ENCODE measurements at regions of chr3 and their contacts with region 1.

Region 1: DNA sequence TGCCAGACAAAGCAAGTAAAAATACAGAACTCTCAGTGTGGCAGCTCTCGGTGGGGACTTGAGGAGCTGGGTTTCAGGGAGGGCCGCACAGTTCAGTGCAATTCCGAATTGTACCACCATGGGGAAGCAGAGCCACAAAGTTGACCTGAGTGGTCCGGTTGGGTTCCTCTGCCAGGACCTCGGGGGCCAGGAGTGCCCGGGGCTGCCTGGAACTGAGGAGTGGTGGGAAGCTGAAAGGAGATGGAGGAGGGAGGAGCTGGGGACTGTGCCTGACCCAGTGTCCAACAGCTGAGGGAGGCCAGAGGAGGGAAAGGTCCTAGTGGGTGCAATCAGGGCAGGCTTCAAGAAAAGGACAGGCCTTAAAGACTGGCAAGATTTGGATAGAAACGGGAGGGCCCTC is 32.2 kb upstream of the TRH start:
- DNase-seq: peak; percentile 72 to 82 (median 73)
- H3K4me3 ChIP-seq: no peak overlapping the region
- H3K27ac ChIP-seq: no peak overlapping the region
- H3K4me1 ChIP-seq: peaks cover 1 to 15% (median 4%) of the 10 kb centered on the region in 4 experiments
- H3K27me3 ChIP-seq: no peaks in the 10 kb centered on the region

Region 2: DNA sequence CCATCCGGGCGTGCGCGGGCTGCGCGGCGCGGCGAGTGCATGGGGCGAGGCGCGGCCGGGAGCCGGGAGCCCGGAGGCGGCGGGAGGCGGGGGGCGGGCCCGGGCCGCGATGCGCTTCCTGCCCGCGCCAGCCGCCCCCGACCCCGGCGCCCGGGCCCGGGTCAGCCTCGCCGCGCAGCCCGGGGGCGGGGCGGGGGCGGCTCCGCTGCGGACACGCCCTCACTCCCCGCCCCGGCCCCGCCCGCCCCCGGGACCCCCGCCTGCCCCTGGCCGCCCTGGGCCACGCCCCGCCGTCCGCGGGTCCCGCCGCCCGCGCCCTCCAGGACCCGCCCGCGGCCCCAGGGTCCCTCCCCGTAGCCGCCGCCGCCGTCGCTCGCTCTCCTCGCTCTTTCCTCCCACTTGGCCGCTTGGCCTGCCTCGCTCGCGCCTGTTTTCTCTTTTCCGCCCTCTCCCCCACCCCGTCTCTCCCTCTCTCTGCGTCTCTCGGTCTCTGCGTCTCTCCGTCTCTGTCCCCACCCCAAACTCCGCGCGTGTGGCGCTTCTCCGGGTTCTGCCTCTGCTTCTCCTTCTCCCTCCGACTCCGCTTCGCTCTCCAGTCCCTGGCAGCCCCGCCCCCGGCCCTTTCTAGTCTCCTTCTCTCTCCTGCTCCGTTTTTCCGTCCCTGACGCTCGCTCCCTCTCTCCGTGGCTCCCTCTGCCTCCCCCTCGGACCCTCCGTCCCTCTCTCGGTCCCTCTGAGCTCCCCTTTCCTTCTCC is 335.5 kb before region 1 on chr3 and contains the start of gene PLXND1:
- CTCF ChIA-PET with region 1: no interaction called
- POLR2A ChIA-PET with region 1: no interaction called
- DNase-seq: peak in 2 of 3 donors; percentile 55 to 65
- H3K4me3 ChIP-seq: peak within 1 kb of the TSS; percentile 52 to 82 (median 73)
- H3K27ac ChIP-seq: peak within 1 kb of the TSS in 1 of 2 experiments; percentile 25
- H3K4me1 ChIP-seq: peaks cover 0 to 84% (median 70%) of the 10 kb centered on the region in 4 experiments
- H3K27me3 ChIP-seq: no peaks in the 10 kb centered on the region

Region 3: DNA sequence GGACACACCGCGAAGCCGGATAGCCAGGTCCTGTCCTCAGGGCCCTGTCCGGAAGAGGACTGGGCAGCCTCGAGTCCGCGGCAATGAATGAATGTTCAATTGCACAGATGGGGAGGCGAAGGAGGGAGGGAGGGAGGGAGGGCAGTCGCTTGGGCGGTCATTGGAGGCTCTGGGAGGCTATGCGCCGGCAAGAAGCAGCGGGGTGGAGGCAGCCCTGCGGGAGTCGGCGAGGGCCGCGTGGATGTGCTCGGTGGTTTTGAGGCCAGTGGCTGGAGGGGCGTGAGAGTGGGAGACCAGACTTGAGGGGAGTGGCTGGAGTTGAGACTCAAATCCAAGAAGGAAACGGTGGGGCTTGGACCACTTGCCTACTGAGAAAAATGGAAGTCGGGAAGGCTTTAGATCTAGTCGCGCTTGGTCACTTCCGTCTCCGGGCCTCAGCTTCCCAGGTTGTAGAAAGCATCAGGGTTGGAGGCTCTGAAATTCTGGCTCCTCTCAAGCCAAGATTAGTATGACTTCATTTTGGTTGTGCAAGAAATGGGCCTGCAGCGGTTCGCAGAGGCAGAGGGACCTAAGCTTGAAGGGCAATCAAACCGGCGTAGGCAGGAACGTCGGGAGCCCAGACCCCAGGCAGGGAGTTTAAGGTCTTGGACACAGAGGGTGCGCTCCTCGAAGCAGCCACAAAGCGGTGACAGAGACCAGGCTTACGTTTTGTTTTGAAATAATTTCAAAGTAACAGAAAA is 314.7 kb before region 1 on chr3:
- CTCF ChIA-PET with region 1: interaction called, 13 read pairs
- POLR2A ChIA-PET with region 1: interaction called, 3 read pairs
- DNase-seq: peak; percentile 83 to 91 (median 90)
- H3K4me3 ChIP-seq: peak overlapping the region; percentile 51 to 81 (median 71)
- H3K27ac ChIP-seq: no peak overlapping the region
- H3K4me1 ChIP-seq: peaks cover 0 to 44% (median 28%) of the 10 kb centered on the region in 4 experiments
- H3K27me3 ChIP-seq: no peaks in the 10 kb centered on the region

Region 4: DNA sequence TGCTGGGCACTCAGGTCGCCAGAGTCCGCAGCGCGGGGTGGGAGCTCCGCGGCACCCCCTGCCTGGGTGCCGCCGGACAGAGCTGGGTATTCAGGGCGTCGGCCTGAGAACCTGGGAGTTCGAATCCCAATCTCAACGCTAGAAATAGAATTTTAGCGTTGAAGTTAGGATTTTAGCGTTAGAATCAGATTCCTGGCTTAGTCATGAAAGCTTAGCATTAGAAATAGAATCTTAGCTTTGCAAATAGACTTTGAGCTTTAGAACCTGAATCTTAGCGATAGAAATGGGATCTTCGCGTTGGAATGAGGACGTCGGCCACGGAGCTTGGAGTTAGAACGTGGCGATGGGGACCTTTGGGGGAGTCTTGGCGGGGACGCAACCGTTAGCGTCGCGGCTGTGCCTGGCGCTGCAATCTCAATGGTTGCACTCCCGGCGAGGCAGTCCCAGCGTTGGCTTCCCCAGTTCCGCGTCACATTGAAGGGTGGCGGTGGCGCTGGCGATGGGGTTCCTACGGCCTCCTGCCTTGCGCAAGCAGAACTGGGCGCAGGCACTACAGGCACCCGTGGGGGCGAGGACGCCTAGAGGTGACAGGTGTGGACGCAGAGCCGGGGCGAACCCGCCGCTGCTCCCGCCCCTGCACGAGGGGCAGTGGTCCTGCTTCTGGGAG is 32.9 kb after region 1 on chr3:
- CTCF ChIA-PET with region 1: interaction called, 69 read pairs
- POLR2A ChIA-PET with region 1: interaction called, 4 read pairs
- DNase-seq: peak; percentile 31 to 75 (median 62)
- H3K4me3 ChIP-seq: peak overlapping the region; percentile 32 to 75 (median 66)
- H3K27ac ChIP-seq: no peak overlapping the region
- H3K4me1 ChIP-seq: peaks cover 0 to 20% (median 20%) of the 10 kb centered on the region in 4 experiments
- H3K27me3 ChIP-seq: peaks cover 0 to 36% (median 10%) of the 10 kb centered on the region in 5 experiments

Region 5: DNA sequence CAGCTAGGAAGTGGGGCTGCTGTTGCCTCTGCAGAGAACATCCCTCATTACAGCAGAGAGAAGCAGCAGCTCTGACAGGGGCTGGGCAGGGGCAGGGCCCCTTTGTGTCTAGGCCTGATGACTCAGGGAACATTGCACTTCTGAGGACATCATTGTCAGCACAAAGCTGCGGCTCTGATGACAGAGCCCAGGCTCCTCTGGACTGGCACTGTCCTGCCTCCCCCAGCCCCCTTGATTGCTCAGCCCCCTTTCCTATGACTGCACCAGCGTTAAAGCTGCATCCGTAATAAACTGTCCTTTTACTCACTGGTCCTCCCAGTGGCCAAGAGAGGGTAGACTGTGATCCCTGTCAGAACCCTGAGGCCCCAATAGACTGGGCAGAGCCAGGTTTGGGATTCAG is 50.5 kb after region 1 on chr3:
- CTCF ChIA-PET with region 1: interaction called, 72 read pairs
- POLR2A ChIA-PET with region 1: no interaction called
- DNase-seq: peak in 2 of 3 donors; percentile 24 to 35
- H3K4me3 ChIP-seq: no peak overlapping the region
- H3K27ac ChIP-seq: no peak overlapping the region
- H3K4me1 ChIP-seq: no peaks in the 10 kb centered on the region
- H3K27me3 ChIP-seq: no peaks in the 10 kb centered on the region

Region 6: DNA sequence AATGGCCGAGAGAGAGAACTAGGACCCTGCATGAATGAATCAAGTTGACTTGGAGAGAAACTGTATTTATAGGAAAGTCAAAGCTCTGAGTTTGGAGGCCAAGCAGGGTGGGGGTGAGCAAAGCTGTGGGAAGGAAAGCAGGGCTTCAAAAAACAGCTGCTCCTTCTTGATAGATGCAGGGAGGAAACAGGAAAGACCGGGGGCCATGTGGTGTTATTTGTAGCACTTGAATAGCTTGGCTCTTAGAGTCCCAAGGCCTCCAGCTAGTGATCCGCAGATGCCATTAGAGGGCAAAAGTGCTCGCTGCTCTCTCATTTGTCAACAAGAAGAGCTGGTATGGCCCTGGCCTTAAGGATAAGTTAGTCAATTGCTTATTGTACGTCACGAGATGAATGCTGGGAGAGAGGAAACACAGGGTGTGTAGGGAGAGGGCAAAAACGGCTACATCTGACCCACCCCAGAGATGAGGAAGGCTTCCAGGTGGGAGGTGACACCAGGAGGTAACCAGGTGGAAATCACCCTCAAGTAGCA is 139.1 kb after region 1 on chr3 and contains the start of gene ALG1L2:
- CTCF ChIA-PET with region 1: interaction called, 14 read pairs
- POLR2A ChIA-PET with region 1: no interaction called
- DNase-seq: peak; percentile 82 to 95 (median 93)
- H3K4me3 ChIP-seq: peak within 1 kb of the TSS in 2 of 7 experiments; percentile 11 to 34
- H3K27ac ChIP-seq: no peak within 1 kb of the TSS
- H3K4me1 ChIP-seq: peaks cover 4 to 56% (median 32%) of the 10 kb centered on the region in 4 experiments
- H3K27me3 ChIP-seq: no peaks in the 10 kb centered on the region

Region 7: GRCh38 chr3:130111185-130111864 is 169.0 kb after region 1 on chr3:
- CTCF ChIA-PET with region 1: interaction called, 62 read pairs
- POLR2A ChIA-PET with region 1: no interaction called
- DNase-seq: peak; percentile 98
- H3K4me3 ChIP-seq: peak overlapping the region; percentile 61 to 84 (median 75)
- H3K27ac ChIP-seq: peak overlapping the region in 1 of 2 experiments; percentile 73
- H3K4me1 ChIP-seq: peaks cover 0 to 13% (median 6%) of the 10 kb centered on the region in 4 experiments
- H3K27me3 ChIP-seq: no peaks in the 10 kb centered on the region

Measured in common myeloid progenitor, CD34-positive (primary cell).